Activated T-helper 2 cell treated with anti-CD3 and anti-CD28 coated beads, Interferon-gamma antibody, Interleukin-2, Interleukin-4, amounts not matched to agents 10 μg/mL and 5 μg/mL and 100 μg/mL, durations not matched to agents 14 hours and 24 hours and 36 hours (primary cell): ENCODE measurements at regions of chr12 and their contacts with region 1.

Region 1: GRCh38 chr12:96399919-96400797 is at the start of gene CDK17:
- DNase-seq: peak; percentile 81
- H3K4me3 Mint-ChIP-seq: peak within 1 kb of the TSS; percentile 98
- H3K27ac Mint-ChIP-seq: peak within 1 kb of the TSS; percentile 97
- H3K4me1 Mint-ChIP-seq: peaks cover 48% of the 10 kb centered on the region
- H3K27me3 Mint-ChIP-seq: no peaks in the 10 kb centered on the region
- total RNA-seq, gene CDK17: 34.7 and 37.6 TPM in 2 replicates

Region 2: DNA sequence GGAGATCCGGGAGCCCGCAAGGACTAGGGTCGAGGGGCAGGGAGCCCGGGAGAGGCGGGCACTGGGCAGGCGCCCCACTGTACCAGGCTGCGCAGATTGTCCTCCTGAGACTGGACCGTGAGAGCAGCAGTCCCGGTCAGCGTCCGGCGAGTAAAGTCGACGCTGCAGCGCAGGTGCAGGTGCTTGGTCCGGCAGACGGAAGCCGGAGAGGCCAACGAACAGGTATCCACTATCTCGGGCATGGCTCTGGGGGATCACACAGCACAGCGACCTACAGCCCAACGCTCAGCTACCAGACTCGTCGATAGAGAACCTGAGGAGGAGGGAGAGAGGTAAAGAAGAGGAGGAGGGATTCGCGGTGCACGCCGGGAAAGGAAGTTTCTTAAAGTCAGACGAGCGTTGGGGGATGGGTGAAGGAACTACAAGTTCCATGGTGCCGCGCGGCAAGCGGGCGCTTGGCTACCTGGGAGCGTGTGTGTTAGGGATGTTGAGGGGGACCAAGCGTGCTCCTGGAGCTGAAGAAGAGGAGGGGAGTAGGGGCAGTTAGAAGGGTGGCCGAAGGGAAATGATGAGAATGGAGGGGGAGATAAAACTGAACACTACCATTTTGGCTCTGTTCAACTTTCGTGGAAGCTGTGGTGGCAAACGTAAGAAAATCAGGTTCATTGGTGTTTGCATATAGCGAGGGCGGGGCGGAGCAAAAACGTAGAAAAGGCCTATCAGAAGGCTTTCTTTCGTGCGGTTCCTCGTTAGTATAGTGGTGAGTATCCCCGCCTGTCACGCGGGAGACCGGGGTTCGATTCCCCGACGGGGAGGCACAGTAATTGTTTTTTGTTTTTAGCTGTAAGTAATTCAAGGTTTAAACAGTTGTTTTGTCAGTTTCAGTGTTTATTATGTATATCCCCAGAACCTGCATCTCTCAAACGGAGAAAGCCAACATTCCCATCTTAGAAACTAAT is 364.6 kb before region 1 on chr12 and contains the start of gene LTA4H:
- intact Hi-C with region 1: loop called (anchors 5 kb)
- DNase-seq: peak; percentile 94
- H3K4me3 Mint-ChIP-seq: no peak within 1 kb of the TSS
- H3K27ac Mint-ChIP-seq: no peak within 1 kb of the TSS
- H3K4me1 Mint-ChIP-seq: peaks cover 8% of the 10 kb centered on the region
- H3K27me3 Mint-ChIP-seq: no peaks in the 10 kb centered on the region
- total RNA-seq, gene LTA4H: 63.6 and 65.2 TPM in 2 replicates

Region 3: DNA sequence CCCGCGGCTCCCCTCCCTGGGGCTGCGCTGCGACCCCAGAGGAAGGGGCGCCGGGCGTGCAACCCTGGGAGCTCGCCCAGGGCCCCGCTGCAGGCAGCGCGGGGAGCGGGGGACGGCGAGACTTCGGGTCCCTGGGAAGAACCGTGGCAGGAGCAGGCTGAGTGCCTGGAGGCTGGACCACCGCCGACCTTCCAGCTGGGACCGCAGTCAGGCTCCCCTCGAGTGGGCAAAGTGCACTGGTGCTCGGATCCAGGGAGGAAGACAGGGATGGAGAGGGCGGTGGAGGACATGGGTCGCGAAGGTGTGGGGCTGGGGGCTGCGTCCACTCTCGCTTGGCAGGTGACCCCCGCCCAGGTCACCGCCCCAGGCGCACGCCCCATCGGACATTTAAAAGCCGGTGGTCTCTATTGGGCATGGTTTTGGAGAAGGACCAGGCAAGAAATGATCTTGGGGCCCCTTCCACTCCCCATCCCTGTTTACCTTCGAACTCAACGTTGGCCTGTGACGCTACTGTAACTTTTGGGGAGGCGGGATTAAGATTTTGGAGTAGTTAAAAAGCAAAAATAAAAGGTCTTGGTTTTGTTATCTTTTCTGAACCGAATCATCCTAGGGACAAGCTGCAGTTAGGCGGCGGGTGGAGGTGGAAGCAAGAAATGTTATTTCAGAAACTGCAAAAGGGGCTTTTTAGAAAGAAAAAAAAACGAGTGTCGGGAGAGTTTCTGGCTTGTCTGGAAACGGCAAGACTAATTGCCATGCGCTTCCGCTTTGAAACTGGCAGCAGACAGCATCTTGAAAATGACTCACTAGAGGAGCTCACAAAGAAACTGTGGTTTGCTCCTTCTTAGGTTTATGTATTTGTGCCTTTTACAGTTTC is 204.9 kb before region 1 on chr12:
- intact Hi-C with region 1: loop called (anchors 2 kb)
- DNase-seq: peak; percentile 63
- H3K4me3 Mint-ChIP-seq: peak overlapping the region; percentile 92
- H3K27ac Mint-ChIP-seq: peak overlapping the region; percentile 94
- H3K4me1 Mint-ChIP-seq: peaks cover 54% of the 10 kb centered on the region
- H3K27me3 Mint-ChIP-seq: no peaks in the 10 kb centered on the region

Region 4: DNA sequence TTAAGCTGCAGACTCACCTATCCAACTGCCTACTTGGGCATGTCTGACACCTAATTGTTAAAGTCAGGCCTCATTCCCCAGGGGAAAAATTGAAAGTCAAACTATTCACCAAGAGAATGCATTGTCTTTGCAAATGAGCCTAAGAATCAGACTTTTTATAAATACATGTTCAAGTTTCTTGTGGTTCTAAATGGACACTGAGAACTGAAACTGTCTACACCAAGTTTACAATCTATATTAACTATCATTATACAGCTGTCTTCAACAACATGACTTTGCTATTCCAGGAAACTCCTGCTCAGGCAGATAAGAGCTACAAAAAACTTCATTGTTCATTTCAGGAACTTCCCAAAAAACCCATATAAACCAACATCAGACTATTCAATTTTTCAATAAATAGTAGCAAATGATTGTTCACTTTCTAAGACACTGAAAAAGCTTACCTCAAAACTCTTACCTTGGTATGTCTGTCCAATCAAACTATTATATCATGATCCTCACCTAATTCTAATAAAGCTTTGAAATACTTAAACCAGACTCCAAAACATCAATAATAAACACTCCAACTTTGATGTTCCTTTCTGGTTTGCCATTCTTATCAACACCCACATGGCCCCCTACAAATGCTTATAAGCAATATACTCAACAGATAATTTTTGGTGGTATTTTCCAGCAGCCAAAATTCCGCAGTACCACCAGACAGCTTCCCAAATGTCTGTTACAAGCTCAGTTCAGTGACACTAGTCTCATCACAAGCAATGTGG is 24.1 kb before region 1 on chr12:
- intact Hi-C with region 1: loop called (anchors 1 kb)
- DNase-seq: no peak
- H3K4me3 Mint-ChIP-seq: no peak overlapping the region
- H3K27ac Mint-ChIP-seq: peak overlapping the region; percentile 49
- H3K4me1 Mint-ChIP-seq: peaks cover 68% of the 10 kb centered on the region
- H3K27me3 Mint-ChIP-seq: no peaks in the 10 kb centered on the region

Region 5: GRCh38 chr12:96427269-96427729 is 27.1 kb after region 1 on chr12:
- intact Hi-C with region 1: loop called (anchors 1 kb)
- DNase-seq: no peak
- H3K4me3 Mint-ChIP-seq: peak overlapping the region; percentile 58
- H3K27ac Mint-ChIP-seq: peak overlapping the region; percentile 88
- H3K4me1 Mint-ChIP-seq: peaks cover 52% of the 10 kb centered on the region
- H3K27me3 Mint-ChIP-seq: no peaks in the 10 kb centered on the region

Region 6: DNA sequence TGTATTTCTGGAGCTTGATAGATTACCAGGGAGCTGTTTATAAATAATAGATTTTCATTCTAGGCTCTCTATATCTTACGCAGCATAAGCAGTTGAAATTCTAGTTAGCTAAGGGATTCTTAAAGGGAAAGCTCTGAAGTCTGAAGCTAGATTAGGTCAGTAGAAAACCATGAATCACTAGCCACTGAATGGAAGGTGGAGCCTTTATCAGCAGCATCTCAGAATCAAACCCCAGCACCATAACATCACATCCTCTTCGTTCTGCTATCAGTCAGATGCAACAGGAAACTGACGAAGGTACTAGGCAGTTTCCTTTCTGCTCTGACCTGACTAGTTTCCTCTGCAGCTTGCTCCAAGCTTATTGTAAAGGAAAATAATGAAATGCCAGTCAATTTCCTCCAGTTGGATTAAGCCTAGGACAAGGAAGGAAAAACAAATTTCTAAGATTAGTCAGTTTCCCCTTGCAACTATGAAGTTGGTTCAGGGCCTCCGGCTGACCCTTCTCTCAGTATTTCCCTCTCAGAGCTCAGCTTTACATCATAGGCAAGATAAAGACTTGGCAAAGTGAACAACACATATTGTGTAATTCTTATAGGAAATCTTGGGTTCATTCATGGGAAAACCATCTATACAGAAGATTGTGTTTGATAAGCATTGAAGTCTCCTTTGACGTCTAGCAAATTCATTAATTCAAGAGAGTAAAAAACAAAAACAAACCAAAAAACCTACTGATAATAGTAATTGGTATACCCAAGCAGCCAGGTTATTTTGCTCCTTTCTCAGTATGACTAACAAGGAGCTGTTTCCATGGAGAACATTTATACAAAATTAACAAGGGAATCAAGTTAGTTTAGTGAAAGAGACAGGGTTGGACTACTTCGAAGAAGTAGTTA is 45.8 kb after region 1 on chr12:
- intact Hi-C with region 1: loop called (anchors 1 kb)
- DNase-seq: peak; percentile 72
- H3K4me3 Mint-ChIP-seq: peak overlapping the region; percentile 26
- H3K27ac Mint-ChIP-seq: peak overlapping the region; percentile 94
- H3K4me1 Mint-ChIP-seq: peaks cover 50% of the 10 kb centered on the region
- H3K27me3 Mint-ChIP-seq: no peaks in the 10 kb centered on the region

Region 7: DNA sequence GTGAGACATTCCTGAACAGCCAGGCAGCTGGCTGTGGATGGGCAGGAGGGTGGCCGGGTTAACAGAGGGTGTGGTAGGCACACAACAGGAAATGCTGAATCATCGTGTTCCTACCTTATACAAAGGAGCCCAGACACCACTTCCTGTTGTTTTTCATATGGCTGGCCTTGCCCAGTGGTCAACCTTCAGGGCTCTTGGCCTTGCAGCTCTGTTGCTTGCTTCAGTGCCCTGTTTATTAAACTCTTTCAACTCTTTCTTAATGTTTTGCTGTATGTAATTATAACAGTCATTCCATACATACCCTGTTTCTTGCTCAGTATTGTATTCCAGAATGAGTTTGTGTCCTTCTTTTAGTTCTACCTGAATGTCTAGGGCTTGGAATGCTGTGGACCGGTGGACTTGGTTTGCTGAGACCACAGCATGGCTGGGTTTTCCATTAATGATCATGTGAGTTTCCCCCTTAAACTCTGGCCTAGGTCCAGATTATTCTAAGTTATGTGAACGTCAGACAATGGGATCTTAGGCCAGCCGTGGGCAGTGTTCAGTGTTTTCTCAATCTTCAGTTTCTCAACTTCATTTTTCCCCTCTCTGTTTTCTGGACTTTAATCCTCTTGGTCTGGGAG is 101.1 kb after region 1 on chr12:
- intact Hi-C with region 1: loop called (anchors 5 kb)
- DNase-seq: no peak
- H3K4me3 Mint-ChIP-seq: no peak overlapping the region
- H3K27ac Mint-ChIP-seq: peak overlapping the region; percentile 74
- H3K4me1 Mint-ChIP-seq: peaks cover 48% of the 10 kb centered on the region
- H3K27me3 Mint-ChIP-seq: no peaks in the 10 kb centered on the region